Activated naive CD4-positive, alpha-beta T cell treated with anti-CD3 and anti-CD28 coated beads for 36 hours (primary cell): ENCODE measurements at regions of chr1 and their contacts with region 1.

Region 1: DNA sequence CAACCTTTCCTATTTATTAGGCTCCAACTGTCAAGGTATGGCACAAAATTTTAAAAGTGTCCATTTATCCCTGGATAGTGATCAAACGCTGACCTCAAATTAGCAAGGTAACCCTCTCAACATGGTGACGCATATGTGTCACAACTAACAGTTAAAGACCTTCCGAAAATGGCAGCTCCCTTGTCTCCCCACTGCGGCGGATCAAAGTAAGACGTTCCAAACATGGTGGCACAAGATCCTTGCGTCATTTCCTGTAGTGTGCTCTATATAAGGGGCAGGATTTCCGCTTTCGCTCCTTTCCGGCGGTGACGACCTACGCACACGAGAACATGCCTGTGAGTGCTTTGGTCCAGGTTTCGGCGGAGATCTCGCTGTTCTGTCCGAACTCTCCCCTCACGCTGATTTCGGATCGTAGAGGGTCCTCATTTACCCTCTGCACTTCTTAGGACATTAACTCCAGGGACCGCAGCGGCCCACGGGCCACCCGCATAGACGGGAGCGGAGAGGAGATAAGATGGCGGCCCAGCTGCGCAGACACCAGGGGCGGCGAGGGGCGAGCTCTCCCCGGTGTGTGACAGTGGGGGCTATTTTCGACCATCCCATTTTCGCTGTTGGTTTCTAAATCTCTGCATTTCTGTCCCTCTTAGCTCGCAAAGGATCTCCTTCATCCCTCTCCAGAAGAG is at the start of gene RPS27:
- DNase-seq: peak; percentile 93
- H3K4me3 Mint-ChIP-seq: peak within 1 kb of the TSS; percentile 93
- H3K27ac Mint-ChIP-seq: peak within 1 kb of the TSS; percentile 97
- H3K4me1 Mint-ChIP-seq: peaks cover 47% of the 10 kb centered on the region
- H3K27me3 Mint-ChIP-seq: peaks cover 3% of the 10 kb centered on the region
- total RNA-seq, gene RPS27: 2,339 to 2,449 TPM

Region 2: GRCh38 chr1:153677718-153678505 is 312.7 kb before region 1 on chr1:
- CTCF ChIA-PET with region 1: interaction called, 5 read pairs
- intact Hi-C with region 1: loop called (anchors 1 kb)
- DNase-seq: peak; percentile 63
- H3K4me3 Mint-ChIP-seq: peak overlapping the region; percentile 71
- H3K27ac Mint-ChIP-seq: no peak overlapping the region
- H3K4me1 Mint-ChIP-seq: peaks cover 20% of the 10 kb centered on the region
- H3K27me3 Mint-ChIP-seq: peaks cover 31% of the 10 kb centered on the region

Region 3: DNA sequence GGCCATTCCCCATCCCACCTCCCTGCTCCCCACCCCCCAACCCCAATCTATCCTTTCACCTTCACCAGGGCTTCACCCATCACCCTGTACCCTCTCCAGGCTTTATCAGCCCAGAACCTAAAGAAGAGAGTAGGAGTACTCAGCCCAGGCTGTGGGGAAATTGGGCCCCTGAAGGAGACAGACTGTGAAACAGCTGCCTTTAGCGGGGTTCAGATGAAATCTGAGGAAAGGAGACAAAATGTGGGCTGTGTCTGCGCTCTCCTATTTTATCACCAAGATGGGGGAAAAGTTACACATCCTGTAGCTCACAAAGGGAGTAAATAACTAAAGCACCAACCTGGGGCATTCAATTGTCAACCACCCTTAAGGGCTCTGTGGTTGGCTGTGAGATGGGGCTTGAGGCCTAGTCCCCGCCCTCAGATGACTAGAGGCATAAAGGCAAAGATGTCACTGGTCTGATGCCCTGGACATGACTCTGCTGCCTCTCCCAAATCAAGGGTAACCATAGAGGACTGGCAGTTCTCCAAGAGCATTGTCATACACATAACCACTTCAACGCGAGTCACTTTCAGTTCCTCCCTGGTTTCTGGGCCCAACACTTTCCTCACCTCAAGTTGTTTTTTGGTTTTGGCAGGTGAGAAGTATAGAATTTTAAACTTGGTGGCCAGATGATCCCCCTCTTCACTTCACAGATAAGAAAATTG is 185.4 kb before region 1 on chr1:
- CTCF ChIA-PET with region 1: interaction called, 5 read pairs
- intact Hi-C with region 1: loop called (anchors 1 kb)
- DNase-seq: peak; percentile 88
- H3K4me3 Mint-ChIP-seq: peak overlapping the region; percentile 17
- H3K27ac Mint-ChIP-seq: peak overlapping the region; percentile 90
- H3K4me1 Mint-ChIP-seq: peaks cover 27% of the 10 kb centered on the region
- H3K27me3 Mint-ChIP-seq: no peaks in the 10 kb centered on the region

Region 4: GRCh38 chr1:153958111-153958960 is 32.3 kb before region 1 on chr1 and contains the start of gene CRTC2:
- CTCF ChIA-PET with region 1: interaction called, 12 read pairs
- intact Hi-C with region 1: loop called (anchors 1 kb)
- DNase-seq: peak; percentile 99
- H3K4me3 Mint-ChIP-seq: peak within 1 kb of the TSS; percentile 86
- H3K27ac Mint-ChIP-seq: peak within 1 kb of the TSS; percentile 92
- H3K4me1 Mint-ChIP-seq: peaks cover 53% of the 10 kb centered on the region
- H3K27me3 Mint-ChIP-seq: no peaks in the 10 kb centered on the region
- total RNA-seq, gene CRTC2: 72.6 to 83.0 TPM

Region 5: GRCh38 chr1:154183045-154183915 is 192.7 kb after region 1 on chr1:
- CTCF ChIA-PET with region 1: no interaction called
- intact Hi-C with region 1: loop called (anchors 1 kb)
- DNase-seq: peak; percentile 98
- H3K4me3 Mint-ChIP-seq: peak overlapping the region; percentile 100
- H3K27ac Mint-ChIP-seq: peak overlapping the region; percentile 99
- H3K4me1 Mint-ChIP-seq: peaks cover 38% of the 10 kb centered on the region
- H3K27me3 Mint-ChIP-seq: no peaks in the 10 kb centered on the region